WTC11 (cell line): ENCODE measurements at regions of chr5 and their contacts with region 1.

Region 1: GRCh38 chr5:168681556-168682183 is 102.5 kb upstream of the PANK3 start:
- DNase-seq: no peak
- ATAC-seq: peak; percentile 20
- H3K4me3 Mint-ChIP-seq: no peak overlapping the region
- H3K27ac Mint-ChIP-seq: no peak overlapping the region
- H3K4me1 Mint-ChIP-seq: 0 out of 2 replicates have a peak, but pooled peaks cover under 1% of the 10 kb centered on the region
- H3K27me3 Mint-ChIP-seq: no peaks in the 10 kb centered on the region; the same call in 1 of the 2 replicates
- CTCF ChIP-seq: no peak

Region 2: DNA sequence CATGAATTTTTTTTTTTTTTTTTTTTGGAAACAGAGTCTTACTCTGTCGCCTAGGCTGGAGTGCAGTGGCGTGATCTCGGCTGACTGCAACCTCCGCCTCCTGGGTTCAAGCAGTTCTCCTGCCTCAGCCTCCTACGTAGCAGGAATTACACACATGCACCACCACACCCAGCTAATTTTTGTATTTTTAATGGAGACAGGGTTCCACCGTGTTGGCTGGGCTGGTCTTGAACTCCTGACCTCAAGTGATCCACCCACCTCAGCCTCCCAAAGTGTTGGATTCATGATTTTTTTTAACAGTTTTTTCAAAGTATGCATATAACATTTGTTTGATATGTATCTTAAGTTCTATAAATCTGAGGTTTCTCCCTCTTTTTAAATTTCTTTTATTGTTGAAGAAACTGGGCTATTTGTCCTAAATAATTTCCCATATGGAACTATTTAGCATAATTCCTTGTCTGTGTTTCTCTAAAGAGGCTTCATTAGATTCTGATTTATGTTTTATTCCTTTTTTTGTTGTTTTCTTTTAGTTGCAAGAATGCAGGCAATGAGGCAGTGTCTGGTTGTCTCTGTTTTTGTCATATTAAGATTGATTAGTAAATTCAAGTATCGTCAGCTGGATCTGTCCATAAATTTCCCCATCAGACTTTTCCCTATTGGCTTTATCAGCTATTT is 179.0 kb before region 1 on chr5:
- CTCF ChIA-PET with region 1: no interaction called
- POLR2A ChIA-PET with region 1: no interaction called
- DNase-seq: no peak
- ATAC-seq: no peak
- H3K4me3 Mint-ChIP-seq: no peak overlapping the region
- H3K27ac Mint-ChIP-seq: no peak overlapping the region
- H3K4me1 Mint-ChIP-seq: no peaks in the 10 kb centered on the region
- H3K27me3 Mint-ChIP-seq: no peaks in the 10 kb centered on the region
- CTCF ChIP-seq: no peak

Region 3: DNA sequence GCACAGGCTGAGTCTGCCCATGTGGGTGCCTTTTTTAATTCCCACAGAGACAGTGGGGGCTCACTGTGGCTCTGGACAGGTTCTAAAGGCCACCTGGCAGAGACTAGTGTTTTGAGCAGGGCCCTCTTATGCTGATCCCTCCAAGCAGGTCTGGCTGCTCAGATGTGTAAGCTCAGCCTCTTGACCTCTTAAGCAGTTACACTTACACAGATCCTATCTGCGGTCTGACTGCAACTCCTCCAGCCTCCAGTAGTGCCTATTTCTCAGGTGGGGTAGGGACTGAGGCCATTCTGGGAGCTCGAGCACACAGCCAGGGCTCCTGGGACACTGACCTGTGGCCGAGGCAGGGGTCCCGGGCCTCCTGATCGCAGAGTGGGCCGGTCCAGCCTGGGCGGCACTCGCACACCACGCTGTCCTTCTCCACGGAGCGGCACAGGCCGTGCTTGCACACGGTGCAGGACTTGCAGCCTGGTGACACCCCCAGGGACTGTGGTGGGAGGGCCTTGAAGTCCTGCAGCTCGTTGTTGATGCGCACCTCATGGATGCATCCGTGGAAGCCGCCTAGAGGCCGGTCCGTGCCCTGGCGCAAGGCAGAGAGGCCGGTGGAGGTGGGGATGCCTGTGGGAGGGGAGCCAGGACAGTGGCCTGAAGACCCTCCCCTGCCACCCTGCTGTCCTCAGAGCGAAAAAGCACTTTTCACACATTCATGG is 10.6 kb before region 1 on chr5:
- CTCF ChIA-PET with region 1: interaction called, 12 read pairs
- POLR2A ChIA-PET with region 1: no interaction called
- DNase-seq: peak; percentile 64
- ATAC-seq: peak; percentile 96
- H3K4me3 Mint-ChIP-seq: no peak overlapping the region
- H3K27ac Mint-ChIP-seq: no peak overlapping the region
- H3K4me1 Mint-ChIP-seq: 0 out of 2 replicates have a peak, but pooled peaks cover under 1% of the 10 kb centered on the region
- H3K27me3 Mint-ChIP-seq: no peaks in the 10 kb centered on the region
- CTCF ChIP-seq: no peak